WTC11 (cell line): ENCODE measurements at regions of chr14 and their contacts with region 1.

Region 1: DNA sequence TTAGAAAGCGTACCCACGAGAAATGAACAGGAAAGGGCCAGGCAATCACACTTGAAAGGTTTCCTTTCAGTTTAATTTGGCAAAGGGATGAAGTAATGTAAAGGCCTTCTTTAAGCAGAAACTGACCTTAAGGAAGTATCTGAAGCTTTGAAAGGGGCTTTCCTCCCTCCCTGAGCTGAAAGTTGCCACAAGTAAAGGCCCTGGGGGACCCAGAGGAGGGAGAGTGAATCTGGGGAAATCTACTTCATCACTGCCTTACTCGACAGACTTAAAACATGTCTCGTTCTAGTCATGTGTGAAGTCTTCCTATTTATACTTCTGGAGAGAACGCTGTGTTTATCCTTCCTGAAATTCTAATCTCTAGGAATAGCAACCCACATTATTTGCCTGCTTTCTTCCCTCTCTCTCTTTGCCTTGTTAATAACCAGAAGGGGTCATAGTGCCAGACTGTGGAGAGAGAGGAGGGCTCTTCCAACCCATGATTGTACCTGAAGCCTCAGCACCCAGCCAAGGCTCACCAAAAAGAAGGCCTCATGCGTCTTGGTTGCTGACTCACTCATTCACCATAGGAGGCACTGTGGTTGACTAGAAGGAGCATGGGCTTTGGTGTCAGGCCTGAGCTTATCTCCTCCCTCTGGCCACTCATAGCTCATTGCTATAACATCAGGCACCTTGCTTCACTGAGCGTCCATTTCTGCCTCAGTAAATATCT is 10.2 kb upstream of the GPX2 start:
- DNase-seq: no peak
- ATAC-seq: peak; percentile 76
- H3K4me3 Mint-ChIP-seq: no peak overlapping the region
- H3K27ac Mint-ChIP-seq: no peak overlapping the region
- H3K4me1 Mint-ChIP-seq: peaks cover 37% of the 10 kb centered on the region
- H3K27me3 Mint-ChIP-seq: no peaks in the 10 kb centered on the region
- CTCF ChIP-seq: no peak

Region 2: DNA sequence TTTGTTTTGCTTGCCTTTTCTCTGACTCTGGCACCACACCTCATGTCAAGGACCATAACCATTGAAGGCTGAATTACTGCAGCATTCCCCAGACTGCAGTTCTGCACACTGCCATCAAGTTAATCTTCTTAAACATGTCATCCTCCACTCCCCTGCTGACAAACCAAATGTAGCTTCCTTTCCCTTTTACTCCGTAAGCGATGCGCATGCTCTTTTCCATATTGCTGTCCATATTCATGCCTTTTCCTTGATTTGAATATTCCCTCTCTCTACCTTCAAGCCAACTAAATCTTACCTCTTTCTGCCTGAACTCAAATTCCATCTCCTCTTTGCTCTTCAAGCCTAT is 23.8 kb before region 1 on chr14:
- CTCF ChIA-PET with region 1: no interaction called
- POLR2A ChIA-PET with region 1: no interaction called
- DNase-seq: no peak
- ATAC-seq: no peak
- H3K4me3 Mint-ChIP-seq: no peak overlapping the region
- H3K27ac Mint-ChIP-seq: no peak overlapping the region
- H3K4me1 Mint-ChIP-seq: no peaks in the 10 kb centered on the region
- H3K27me3 Mint-ChIP-seq: no peaks in the 10 kb centered on the region
- CTCF ChIP-seq: no peak

Region 3: GRCh38 chr14:64942531-64943111 is 10.1 kb before region 1 on chr14 and contains the start of gene GPX2:
- CTCF ChIA-PET with region 1: interaction called, 22 read pairs
- POLR2A ChIA-PET with region 1: no interaction called
- DNase-seq: no peak
- ATAC-seq: peak; percentile 12
- H3K4me3 Mint-ChIP-seq: no peak within 1 kb of the TSS
- H3K27ac Mint-ChIP-seq: no peak within 1 kb of the TSS
- H3K4me1 Mint-ChIP-seq: peaks cover 24% of the 10 kb centered on the region
- H3K27me3 Mint-ChIP-seq: no peaks in the 10 kb centered on the region
- CTCF ChIP-seq: no peak
- total RNA-seq, gene GPX2: 0.80 to 1.5 TPM (median 1.0 TPM) in 3 replicates

Region 4: DNA sequence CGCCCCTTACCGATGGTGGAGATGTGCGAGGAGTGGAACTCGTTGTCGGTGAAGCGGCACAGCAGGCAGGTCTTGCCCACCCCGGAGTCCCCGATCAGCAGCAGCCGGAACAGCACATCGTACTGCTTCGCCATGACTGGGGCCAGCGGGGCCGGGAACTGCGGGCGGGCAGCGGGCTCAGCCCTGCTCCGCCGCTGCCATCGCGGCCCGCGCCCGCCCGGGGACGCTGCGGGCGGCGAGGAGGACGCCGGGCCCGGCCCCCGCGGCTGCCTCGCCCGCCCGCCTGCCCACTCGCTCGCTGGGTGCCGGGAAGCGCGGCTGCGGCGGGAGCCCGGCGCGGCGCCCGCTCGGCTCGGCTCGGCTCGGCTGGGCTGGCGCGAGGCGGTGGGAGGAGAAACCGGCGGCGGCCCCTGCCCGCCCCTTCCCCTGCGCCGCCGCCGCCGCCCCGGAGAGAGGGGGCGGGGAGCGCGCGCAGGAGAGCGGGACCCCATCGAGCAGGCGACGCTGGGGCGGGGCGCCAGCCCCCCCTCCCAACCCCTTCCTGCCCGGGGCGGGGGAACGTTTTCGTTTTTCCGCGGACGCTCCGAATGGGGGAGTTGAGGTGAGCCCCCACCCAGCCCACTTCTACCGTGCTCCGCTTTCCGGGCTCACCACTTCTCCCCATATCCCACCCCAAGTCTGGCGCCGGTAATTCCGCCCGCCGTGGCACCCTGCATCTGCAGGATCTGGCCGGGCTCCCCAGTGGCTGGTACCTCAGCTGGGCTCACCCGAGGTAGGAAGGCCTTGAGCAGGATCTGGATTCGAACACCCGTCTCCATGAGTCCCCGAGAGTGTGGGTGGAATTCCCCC is 19.4 kb after region 1 on chr14 and contains the start of gene RAB15:
- CTCF ChIA-PET with region 1: interaction called, 11 read pairs
- POLR2A ChIA-PET with region 1: no interaction called
- DNase-seq: peak; percentile 43
- ATAC-seq: peak; percentile 62
- H3K4me3 Mint-ChIP-seq: peak within 1 kb of the TSS; percentile 78
- H3K27ac Mint-ChIP-seq: no peak within 1 kb of the TSS
- H3K4me1 Mint-ChIP-seq: peaks cover 72% of the 10 kb centered on the region
- H3K27me3 Mint-ChIP-seq: no peaks in the 10 kb centered on the region; the same call in 1 of the 2 replicates
- CTCF ChIP-seq: no peak
- total RNA-seq, gene RAB15: 38.4 to 49.1 TPM (median 38.6 TPM) in 3 replicates